ENCODE measurements at regions of chr14 and their contacts with region 1.

Region 1: DNA sequence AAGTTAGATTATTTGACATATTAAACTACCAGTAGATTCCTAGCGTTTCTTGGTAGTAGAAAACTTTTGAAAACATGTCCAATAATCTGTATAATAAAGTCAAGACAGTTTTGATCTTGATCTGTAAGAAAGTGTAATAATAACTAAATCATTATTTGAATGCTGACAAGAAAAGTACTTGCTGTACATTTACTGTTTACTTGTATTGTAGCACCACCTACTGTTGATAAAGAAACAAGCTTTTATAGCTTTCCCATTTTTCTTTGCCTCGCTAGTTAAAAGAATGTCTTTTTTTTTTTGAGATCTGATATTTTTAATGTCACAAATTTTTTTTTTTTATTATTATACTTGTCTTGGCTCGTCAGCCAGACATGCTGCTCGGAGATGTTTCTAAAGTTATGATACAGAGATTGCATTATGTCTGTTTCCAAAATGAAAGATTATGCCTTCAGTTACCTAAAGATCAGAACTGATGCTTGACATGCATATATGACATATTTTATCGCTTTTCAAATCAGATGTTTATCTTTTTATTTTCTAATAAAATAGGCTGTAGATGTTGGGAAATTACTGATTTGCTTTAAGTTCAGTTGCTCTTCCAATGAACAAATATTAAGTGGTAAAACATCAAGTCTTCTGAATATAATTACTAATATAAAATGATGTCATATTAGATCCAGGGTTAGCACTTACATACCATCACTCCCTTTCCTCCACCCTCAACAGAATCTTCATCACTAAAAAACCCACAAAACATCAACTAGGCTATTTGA is 140.5 kb downstream of the AKAP6 start:
- DNase-seq: no peak
- H3K4me3 ChIP-seq: no peak overlapping the region
- H3K27ac ChIP-seq: no peak overlapping the region
- H3K4me1 ChIP-seq: peaks cover 5% of the 10 kb centered on the region
- H3K27me3 ChIP-seq: no peaks in the 10 kb centered on the region
- CTCF ChIP-seq: peak in 3 of 4 experiments; percentile 42 to 69 (median 66)
- POLR2A ChIP-seq: no peak

Region 2: DNA sequence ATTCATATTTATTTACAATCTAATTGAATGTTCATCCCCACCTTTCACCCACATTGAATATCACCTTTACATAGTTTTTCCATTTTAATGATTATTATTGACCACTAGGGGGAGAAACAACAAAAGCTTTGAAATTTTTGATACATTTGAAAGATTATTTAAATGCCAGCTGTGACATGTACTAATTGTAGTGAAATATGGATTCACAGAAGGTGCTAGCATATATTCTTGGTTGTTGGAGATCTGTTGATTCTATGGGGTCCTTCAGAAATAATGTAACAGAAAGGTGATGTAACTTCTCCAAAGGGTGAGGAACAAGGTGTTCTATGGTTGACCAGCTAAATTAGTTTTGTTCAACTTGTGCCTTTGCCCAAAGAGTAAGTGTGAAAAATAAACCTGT is 959.4 kb before region 1 on chr14:
- intact Hi-C with region 1: loop called (anchors 10 kb)
- DNase-seq: no peak
- H3K4me3 ChIP-seq: no peak overlapping the region
- H3K27ac ChIP-seq: no peak overlapping the region
- H3K4me1 ChIP-seq: no peaks in the 10 kb centered on the region
- H3K27me3 ChIP-seq: no peaks in the 10 kb centered on the region
- CTCF ChIP-seq: peak; percentile 47 to 84 (median 64)
- POLR2A ChIP-seq: no peak

Region 3: DNA sequence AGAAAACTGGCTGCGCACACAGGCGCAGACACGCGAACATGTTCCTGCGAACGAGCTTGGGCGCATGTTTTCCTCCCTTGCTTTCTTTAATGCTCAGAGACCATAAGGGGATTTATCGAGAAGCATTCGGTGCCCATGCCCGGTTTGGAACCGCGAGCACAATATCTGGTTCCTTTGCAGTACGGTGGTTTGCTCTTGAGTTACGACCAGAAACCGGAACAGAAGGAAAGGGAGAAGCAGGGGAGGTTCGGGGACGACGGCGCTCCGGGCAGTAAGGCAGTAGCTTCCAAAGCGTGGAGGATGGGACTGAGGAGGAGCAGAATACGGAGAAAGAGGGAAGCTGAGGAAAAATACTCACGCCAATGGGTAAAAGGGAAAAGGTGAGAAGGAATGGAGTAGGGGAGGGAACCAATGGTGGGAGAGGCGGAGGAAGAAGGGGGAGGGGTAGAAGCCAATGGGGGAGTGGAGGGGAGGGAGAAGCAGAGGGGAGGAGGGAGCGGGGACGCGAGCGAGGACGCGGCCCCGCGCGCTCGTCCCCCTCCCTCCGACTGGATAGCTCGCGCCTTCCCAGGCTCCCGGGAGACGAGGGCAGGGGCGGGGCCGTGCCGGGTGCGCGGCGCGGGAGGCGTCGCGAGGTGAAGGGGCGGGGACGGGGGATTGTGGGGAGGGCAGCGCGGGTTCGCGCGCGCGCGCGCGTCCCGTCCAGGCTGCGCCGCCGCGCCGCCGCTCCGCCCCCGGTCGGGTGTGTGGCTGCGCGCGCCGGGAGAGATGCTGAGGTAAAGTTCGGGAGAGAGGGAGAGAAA is 393.1 kb before region 1 on chr14:
- intact Hi-C with region 1: loop called (anchors 5 kb)
- DNase-seq: peak; percentile 95
- H3K4me3 ChIP-seq: peak overlapping the region; percentile 94 to 97
- H3K27ac ChIP-seq: peak overlapping the region; percentile 99 to 100
- H3K4me1 ChIP-seq: no peaks in the 10 kb centered on the region
- H3K27me3 ChIP-seq: no peaks in the 10 kb centered on the region
- CTCF ChIP-seq: no peak
- POLR2A ChIP-seq: peak; percentile 73

Region 4: GRCh38 chr14:32509632-32510187 is 40.1 kb after region 1 on chr14:
- intact Hi-C with region 1: loop called (anchors 5 kb)
- DNase-seq: peak; percentile 73
- H3K4me3 ChIP-seq: no peak overlapping the region
- H3K27ac ChIP-seq: peak overlapping the region in 1 of 2 donors; percentile 21
- H3K4me1 ChIP-seq: no peaks in the 10 kb centered on the region
- H3K27me3 ChIP-seq: no peaks in the 10 kb centered on the region
- CTCF ChIP-seq: no peak
- POLR2A ChIP-seq: no peak

Region 5: GRCh38 chr14:32560209-32560857 is 90.8 kb after region 1 on chr14:
- intact Hi-C with region 1: loop called (anchors 5 kb)
- DNase-seq: peak; percentile 60
- H3K4me3 ChIP-seq: no peak overlapping the region
- H3K27ac ChIP-seq: no peak overlapping the region
- H3K4me1 ChIP-seq: peaks cover 3% of the 10 kb centered on the region
- H3K27me3 ChIP-seq: no peaks in the 10 kb centered on the region
- CTCF ChIP-seq: peak; percentile 61 to 92 (median 75)
- POLR2A ChIP-seq: no peak

Measured in prostate gland (tissue), 2 donors.